ENCODE measurements at regions of chr17 and their contacts with region 1.

Region 1: GRCh38 chr17:49707608-49708514 is at the start of gene SLC35B1:
- DNase-seq: peak; percentile 98 to 99 (median 99)
- ATAC-seq: peak; percentile 97
- H3K4me3 ChIP-seq: peak within 1 kb of the TSS; percentile 58 to 98
- H3K27ac ChIP-seq: peak within 1 kb of the TSS; percentile 90
- H3K4me1 ChIP-seq: peaks cover 9 to 34% of the 10 kb centered on the region in 2 donors
- H3K27me3 ChIP-seq: no peaks in the 10 kb centered on the region
- CTCF ChIP-seq: peak; percentile 50 to 58
- polyA plus RNA-seq, gene SLC35B1: 57.6 to 67.1 (median 62.0) TPM

Region 2: GRCh38 chr17:49779739-49780231 is 71.9 kb after region 1 on chr17:
- intact Hi-C with region 1: loop called in 1 of 2 experiments (anchors 5 kb)
- DNase-seq: peak in 1 of 4 donors; percentile 71
- ATAC-seq: peak; percentile 76
- H3K4me3 ChIP-seq: no peak overlapping the region
- H3K27ac ChIP-seq: peak overlapping the region in 1 of 2 donors; percentile 22
- H3K4me1 ChIP-seq: peaks cover 17 to 19% of the 10 kb centered on the region in 2 donors
- H3K27me3 ChIP-seq: no peaks in the 10 kb centered on the region
- CTCF ChIP-seq: peak in 1 of 2 donors; percentile 33

Region 3: GRCh38 chr17:49843774-49844350 is 136.0 kb after region 1 on chr17:
- intact Hi-C with region 1: loop called (anchors 10 kb)
- DNase-seq: no peak
- ATAC-seq: peak; percentile 30
- H3K4me3 ChIP-seq: no peak overlapping the region
- H3K27ac ChIP-seq: no peak overlapping the region
- H3K4me1 ChIP-seq: peaks cover 0 to 6% of the 10 kb centered on the region in 2 donors
- H3K27me3 ChIP-seq: no peaks in the 10 kb centered on the region
- CTCF ChIP-seq: no peak